ENCODE measurements at regions of chrX and their contacts with region 1.

Region 1: DNA sequence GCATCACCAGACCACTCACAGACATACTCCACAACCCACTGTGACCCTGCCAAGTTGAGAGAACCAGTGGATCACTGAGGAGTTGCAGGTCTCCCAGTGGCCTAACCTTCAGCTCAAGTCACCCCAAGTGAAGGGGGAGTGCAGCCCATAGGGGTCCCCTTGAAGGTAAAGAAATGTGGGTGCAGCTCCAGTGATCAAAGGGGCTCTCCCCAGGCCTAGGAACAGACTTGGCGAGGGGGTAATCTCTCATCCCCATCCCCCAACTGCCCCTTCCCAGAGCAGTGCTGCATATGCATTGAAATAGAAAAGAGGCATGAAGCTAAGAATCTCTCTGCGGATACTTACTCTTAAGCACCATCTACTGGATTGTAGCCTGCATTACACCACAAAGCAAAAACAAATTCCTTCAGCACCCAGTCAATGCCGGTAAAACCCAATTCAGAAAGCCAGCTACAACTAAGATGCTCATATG is 27.0 kb downstream of the MAGEE1 start:
- DNase-seq: no peak
- H3K4me3 ChIP-seq: no peak overlapping the region
- H3K27ac ChIP-seq: no peak overlapping the region
- H3K27me3 ChIP-seq: no peaks in the 10 kb centered on the region
- CTCF ChIP-seq: peak; percentile 56

Region 2: GRCh38 chrX:76279000-76279399 is 175.5 kb before region 1 on chrX:
- CTCF ChIA-PET with region 1: interaction called, 33 read pairs
- POLR2A ChIA-PET with region 1: no interaction called
- DNase-seq: peak; percentile 1
- H3K4me3 ChIP-seq: no peak overlapping the region
- H3K27ac ChIP-seq: no peak overlapping the region
- H3K27me3 ChIP-seq: no peaks in the 10 kb centered on the region
- CTCF ChIP-seq: peak; percentile 66